PC-3 (cell line): ENCODE measurements at regions of chr3 and their contacts with region 1.

Region 1: GRCh38 chr3:177405191-177405672 is 207.9 kb upstream of the TBL1XR1 start:
- DNase-seq: no peak
- ATAC-seq: 0 out of 2 replicates have a peak, but pooled peaks have one; percentile 15
- H3K4me3 ChIP-seq: no peak overlapping the region
- H3K27ac ChIP-seq: no peak overlapping the region
- H3K4me1 ChIP-seq: peaks cover 5% of the 10 kb centered on the region; the same call in 1 of the 2 replicates
- H3K27me3 ChIP-seq: no peaks in the 10 kb centered on the region
- CTCF ChIP-seq: no peak

Region 2: GRCh38 chr3:177431525-177432176 is 26.4 kb after region 1 on chr3:
- CTCF ChIA-PET with region 1: no interaction called
- POLR2A ChIA-PET with region 1: interaction called, 43 read pairs
- intact Hi-C with region 1: no loop called
- DNase-seq: no peak
- ATAC-seq: no peak
- H3K4me3 ChIP-seq: no peak overlapping the region
- H3K27ac ChIP-seq: no peak overlapping the region
- H3K4me1 ChIP-seq: no peaks in the 10 kb centered on the region
- H3K27me3 ChIP-seq: no peaks in the 10 kb centered on the region
- CTCF ChIP-seq: no peak